Activated CD4-positive, alpha-beta memory T cell treated with anti-CD3 and anti-CD28 coated beads for 36 hours (primary cell): ENCODE measurements at regions of chr20 and their contacts with region 1.

Region 1: DNA sequence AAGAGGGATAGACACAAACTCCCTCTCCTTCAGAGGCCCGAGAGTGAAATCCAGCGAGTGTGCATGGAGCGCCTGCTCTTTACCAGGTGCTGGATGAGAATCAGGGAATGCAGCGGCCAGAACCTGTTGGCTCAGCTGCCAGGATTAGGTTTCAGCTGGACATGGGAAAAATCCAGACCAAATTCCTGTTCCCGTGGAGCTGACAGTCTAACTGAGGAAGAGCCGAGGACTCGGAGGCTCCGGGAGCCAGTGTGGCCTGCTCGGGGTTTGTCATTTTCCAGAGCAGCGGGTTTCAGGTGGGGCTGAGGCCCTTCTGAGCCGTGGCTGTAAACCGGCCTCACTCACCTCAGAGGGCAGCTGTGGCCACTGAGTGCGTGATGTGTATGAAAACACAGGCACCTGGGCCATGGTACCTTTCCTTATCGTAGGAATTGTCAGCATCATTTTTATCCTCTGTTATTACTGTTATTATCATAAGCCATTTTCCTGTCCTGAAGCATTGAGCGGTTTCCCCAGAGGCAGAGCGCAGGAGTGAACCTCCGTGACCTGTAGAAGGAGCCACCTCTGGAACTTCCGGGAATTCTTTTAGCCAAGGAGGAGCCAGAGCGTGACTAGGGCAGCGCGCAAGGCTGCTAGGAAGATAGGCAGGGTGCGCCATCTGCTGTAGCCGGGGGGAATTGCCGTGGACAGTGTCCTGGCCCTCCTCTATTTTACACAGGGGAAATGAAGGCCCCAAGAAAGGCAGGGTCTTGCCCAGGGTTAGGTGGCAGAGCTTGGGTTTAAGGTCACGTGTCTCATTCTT is 27.3 kb downstream of the PKIG start:
- DNase-seq: peak; percentile 87
- H3K4me3 Mint-ChIP-seq: no peak overlapping the region
- H3K27ac Mint-ChIP-seq: peak overlapping the region; percentile 52
- H3K4me1 Mint-ChIP-seq: peaks cover 8% of the 10 kb centered on the region
- H3K27me3 Mint-ChIP-seq: no peaks in the 10 kb centered on the region

Region 2: GRCh38 chr20:44210422-44211176 is 399.1 kb before region 1 on chr20 and contains the start of gene OSER1:
- CTCF ChIA-PET with region 1: interaction called, 25 read pairs
- POLR2A ChIA-PET with region 1: no interaction called
- intact Hi-C with region 1: loop called (anchors 2 kb)
- DNase-seq: peak; percentile 99
- H3K4me3 Mint-ChIP-seq: peak within 1 kb of the TSS; percentile 98
- H3K27ac Mint-ChIP-seq: peak within 1 kb of the TSS; percentile 93
- H3K4me1 Mint-ChIP-seq: peaks cover 61% of the 10 kb centered on the region
- H3K27me3 Mint-ChIP-seq: peaks cover 1% of the 10 kb centered on the region
- total RNA-seq, gene OSER1: 23.4 to 24.2 TPM

Region 3: GRCh38 chr20:44388466-44389023 is 221.2 kb before region 1 on chr20:
- CTCF ChIA-PET with region 1: interaction called, 80 read pairs
- POLR2A ChIA-PET with region 1: no interaction called
- intact Hi-C with region 1: loop called (anchors 1 kb)
- DNase-seq: peak; percentile 84
- H3K4me3 Mint-ChIP-seq: no peak overlapping the region
- H3K27ac Mint-ChIP-seq: no peak overlapping the region
- H3K4me1 Mint-ChIP-seq: peaks cover 2% of the 10 kb centered on the region
- H3K27me3 Mint-ChIP-seq: peaks cover 14% of the 10 kb centered on the region

Region 4: GRCh38 chr20:44475694-44476560 is 133.8 kb before region 1 on chr20 and contains the start of gene TTPAL:
- CTCF ChIA-PET with region 1: interaction called, 18 read pairs
- POLR2A ChIA-PET with region 1: no interaction called
- intact Hi-C with region 1: loop called (anchors 2 kb)
- DNase-seq: peak; percentile 94
- H3K4me3 Mint-ChIP-seq: peak within 1 kb of the TSS; percentile 94
- H3K27ac Mint-ChIP-seq: peak within 1 kb of the TSS; percentile 93
- H3K4me1 Mint-ChIP-seq: peaks cover 22% of the 10 kb centered on the region
- H3K27me3 Mint-ChIP-seq: no peaks in the 10 kb centered on the region
- total RNA-seq, gene TTPAL: 18.1 to 18.6 TPM

Region 5: GRCh38 chr20:44576297-44576696 is 33.4 kb before region 1 on chr20:
- CTCF ChIA-PET with region 1: interaction called, 15 read pairs
- POLR2A ChIA-PET with region 1: no interaction called
- intact Hi-C with region 1: no loop called
- DNase-seq: peak; percentile 16
- H3K4me3 Mint-ChIP-seq: no peak overlapping the region
- H3K27ac Mint-ChIP-seq: no peak overlapping the region
- H3K4me1 Mint-ChIP-seq: peaks cover 15% of the 10 kb centered on the region
- H3K27me3 Mint-ChIP-seq: no peaks in the 10 kb centered on the region

Region 6: GRCh38 chr20:44598423-44599305 is 11.0 kb before region 1 on chr20:
- CTCF ChIA-PET with region 1: interaction called, 25 read pairs
- POLR2A ChIA-PET with region 1: no interaction called
- intact Hi-C with region 1: no loop called
- DNase-seq: peak; percentile 12
- H3K4me3 Mint-ChIP-seq: no peak overlapping the region
- H3K27ac Mint-ChIP-seq: no peak overlapping the region
- H3K4me1 Mint-ChIP-seq: peaks cover 7% of the 10 kb centered on the region
- H3K27me3 Mint-ChIP-seq: no peaks in the 10 kb centered on the region

Region 7: DNA sequence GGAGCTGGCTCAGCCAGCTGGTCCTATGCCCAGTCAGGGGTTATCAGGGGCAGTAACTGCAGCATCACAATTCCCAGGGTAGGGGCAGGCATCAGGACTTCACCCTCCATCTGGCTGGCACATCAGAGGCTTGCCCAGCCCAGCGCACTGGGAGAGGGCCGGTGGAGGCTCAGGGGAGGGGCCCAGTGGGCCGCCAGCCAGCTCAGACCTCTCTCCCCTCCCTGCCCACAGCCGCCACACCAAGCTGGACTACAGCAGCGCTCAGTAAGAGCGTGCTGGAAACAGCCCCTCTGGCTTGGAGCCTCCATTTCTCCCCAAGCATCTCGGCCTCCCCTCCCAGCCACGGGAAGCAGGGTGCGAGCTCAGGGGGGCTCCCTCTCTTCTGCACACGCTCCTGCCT is 19.8 kb after region 1 on chr20:
- CTCF ChIA-PET with region 1: no interaction called
- POLR2A ChIA-PET with region 1: no interaction called
- intact Hi-C with region 1: no loop called
- DNase-seq: no peak
- H3K4me3 Mint-ChIP-seq: no peak overlapping the region
- H3K27ac Mint-ChIP-seq: no peak overlapping the region
- H3K4me1 Mint-ChIP-seq: no peaks in the 10 kb centered on the region
- H3K27me3 Mint-ChIP-seq: no peaks in the 10 kb centered on the region